Spleen (tissue), 13 donors: ENCODE measurements at regions of chr21 and their contacts with region 1.

Region 1: DNA sequence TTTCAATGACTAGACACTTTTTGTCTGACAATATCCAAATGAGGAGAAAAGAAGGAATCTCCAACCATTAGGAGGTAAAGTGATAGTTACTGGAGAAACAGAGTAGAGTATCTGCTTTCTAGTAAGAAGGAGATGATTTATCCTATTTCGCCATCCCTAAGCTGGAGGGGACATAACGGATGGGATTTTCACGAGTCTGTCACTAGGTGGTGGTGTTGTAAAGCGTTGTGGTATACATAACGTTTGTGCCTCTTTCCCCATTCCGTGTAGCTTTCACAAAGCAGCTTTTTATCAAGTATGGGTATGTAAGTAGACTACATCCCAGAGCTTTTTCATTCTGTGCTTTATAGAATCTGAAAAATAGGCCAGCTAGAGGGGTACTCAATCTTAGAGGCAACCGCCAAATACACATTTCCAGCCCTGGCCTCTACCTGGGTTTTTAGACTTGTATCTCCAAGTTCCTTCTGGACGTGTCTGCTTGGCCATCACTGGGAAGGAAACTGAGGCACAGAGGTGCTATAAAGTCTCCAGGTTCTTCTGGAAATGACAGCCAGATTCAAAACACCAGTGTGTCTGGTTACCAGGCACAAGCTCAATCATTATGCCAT is 33.3 kb upstream of the FAM3B start:
- DNase-seq: no peak
- H3K4me3 ChIP-seq: no peak overlapping the region
- H3K27ac ChIP-seq: no peak overlapping the region
- H3K4me1 ChIP-seq: peaks cover 0 to 9% (median 0%) of the 10 kb centered on the region in 6 donors
- H3K27me3 ChIP-seq: no peaks in the 10 kb centered on the region
- CTCF ChIP-seq: peak; percentile 64 to 90 (median 80)
- POLR2A ChIP-seq: no peak

Region 2: DNA sequence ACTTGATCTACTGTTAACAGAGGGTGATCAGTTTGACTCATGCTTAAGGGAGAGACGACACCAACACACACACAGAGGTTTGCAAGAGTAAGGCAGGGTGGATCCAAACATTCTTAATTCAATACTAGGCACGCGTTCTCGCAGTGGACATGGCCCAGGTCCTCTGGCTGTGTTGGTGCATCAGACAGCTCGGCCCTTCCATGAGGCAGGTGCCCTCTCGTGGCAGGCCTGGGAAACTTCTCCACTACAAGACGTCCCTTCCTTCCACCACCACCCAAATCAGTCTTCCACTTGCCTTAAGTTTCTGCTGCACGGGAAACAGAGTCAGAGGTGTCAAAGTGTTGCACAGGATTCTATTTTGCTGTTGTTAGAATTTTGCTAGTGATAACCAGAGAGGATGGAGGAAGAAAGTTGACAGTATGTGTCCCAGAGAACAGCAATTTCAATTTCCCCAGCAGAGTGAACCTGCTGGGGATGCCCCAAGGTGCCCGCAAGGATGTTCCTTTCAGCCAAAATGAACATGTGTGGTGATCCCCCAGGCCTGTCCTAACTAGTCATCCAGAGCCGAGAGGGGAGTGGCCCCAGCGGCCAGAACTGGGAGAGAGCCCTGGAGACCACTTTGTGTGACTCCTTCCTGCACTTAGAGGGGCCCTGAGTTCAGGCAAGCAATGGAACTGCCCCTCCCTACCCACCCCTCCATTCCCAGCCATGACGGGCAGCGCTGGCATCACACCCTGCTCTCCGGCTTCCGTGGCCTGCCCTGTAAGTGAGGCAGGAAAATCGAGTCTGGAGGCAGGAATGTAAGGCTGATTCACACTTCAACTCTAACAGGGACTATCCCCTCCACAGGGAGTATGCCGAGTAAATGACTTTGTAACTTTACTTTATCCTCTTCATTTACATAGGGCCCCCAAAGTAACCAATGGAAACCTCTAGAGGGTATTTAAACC is 177.5 kb after region 1 on chr21:
- intact Hi-C with region 1: loop called (anchors 5 kb)
- DNase-seq: peak; percentile 90
- H3K4me3 ChIP-seq: no peak overlapping the region
- H3K27ac ChIP-seq: no peak overlapping the region
- H3K4me1 ChIP-seq: peaks cover 0 to 17% (median 2%) of the 10 kb centered on the region in 6 donors
- H3K27me3 ChIP-seq: no peaks in the 10 kb centered on the region
- CTCF ChIP-seq: peak; percentile 61 to 84 (median 77)
- POLR2A ChIP-seq: no peak

Region 3: DNA sequence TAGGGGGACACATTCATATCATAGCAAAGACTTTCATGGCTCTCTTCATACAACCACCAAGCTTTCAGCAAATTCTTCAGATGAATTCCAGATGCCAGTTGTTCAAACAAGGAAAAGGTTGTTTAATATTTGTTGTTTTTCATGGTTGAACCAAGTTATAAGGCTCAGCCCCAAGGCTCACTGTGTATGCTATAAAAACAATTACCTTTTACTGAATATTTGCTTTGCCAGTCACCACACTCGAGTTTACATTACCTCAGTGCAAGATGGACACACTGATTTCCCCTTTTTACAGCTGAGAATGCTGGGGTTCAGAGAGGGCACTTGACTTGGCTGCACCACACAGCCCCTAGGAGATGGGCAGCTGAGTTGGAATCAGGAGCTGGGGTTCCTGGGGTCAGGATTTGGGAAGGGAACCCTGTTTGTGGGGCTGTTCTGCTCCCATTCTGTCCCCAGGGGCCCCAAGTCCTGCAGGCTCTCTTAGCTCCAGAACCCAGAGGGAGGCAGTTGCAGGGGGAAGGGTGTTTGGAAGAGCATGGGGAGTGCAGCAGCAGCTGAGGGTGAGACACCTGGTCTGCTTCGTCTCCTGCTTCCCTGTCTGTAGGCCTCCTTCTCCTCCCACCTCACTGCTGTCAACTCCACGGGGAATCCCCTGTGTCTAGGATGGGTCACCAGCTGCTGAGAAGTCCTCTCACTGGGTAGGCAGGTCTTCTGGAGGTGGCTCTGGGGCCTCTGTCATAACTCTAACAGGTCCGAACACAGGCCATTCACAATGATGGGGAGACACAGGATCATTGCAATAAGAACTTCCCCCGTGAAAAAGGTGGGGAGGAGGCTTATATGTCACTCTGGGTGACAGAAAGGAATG is 237.5 kb after region 1 on chr21:
- intact Hi-C with region 1: no loop called
- DNase-seq: no peak
- H3K4me3 ChIP-seq: no peak overlapping the region
- H3K27ac ChIP-seq: no peak overlapping the region
- H3K4me1 ChIP-seq: no peaks in the 10 kb centered on the region
- H3K27me3 ChIP-seq: peaks cover 0 to 18% (median 0%) of the 10 kb centered on the region in 7 donors
- CTCF ChIP-seq: no peak
- POLR2A ChIP-seq: no peak